ENCODE measurements at regions of chr16 and their contacts with region 1.

Region 1: GRCh38 chr16:67660564-67661028 is at the start of gene PARD6A:
- DNase-seq: peak; percentile 87 to 98
- ATAC-seq: peak; percentile 78 to 92 (median 85)
- H3K4me3 ChIP-seq: peak within 1 kb of the TSS; percentile 67
- H3K4me3 Mint-ChIP-seq: peak within 1 kb of the TSS; percentile 94
- H3K27ac ChIP-seq: peak within 1 kb of the TSS; percentile 91
- H3K27ac Mint-ChIP-seq: peak within 1 kb of the TSS; percentile 93 to 94
- H3K4me1 ChIP-seq: peaks cover 26% of the 10 kb centered on the region
- H3K4me1 Mint-ChIP-seq: peaks cover 0 to 33% of the 10 kb centered on the region in 2 donors
- H3K27me3 ChIP-seq: no peaks in the 10 kb centered on the region
- H3K27me3 Mint-ChIP-seq: no peaks in the 10 kb centered on the region
- CTCF ChIP-seq: no peak
- total RNA-seq, gene PARD6A: 3.1 to 4.4 (median 3.3) TPM

Region 2: GRCh38 chr16:67480833-67481560 is 179.6 kb before region 1 on chr16 and contains the start of gene ATP6V0D1:
- intact Hi-C with region 1: loop called (anchors 1 kb)
- DNase-seq: peak; percentile 100
- ATAC-seq: peak; percentile 81 to 97 (median 91)
- H3K4me3 ChIP-seq: peak within 1 kb of the TSS; percentile 87
- H3K4me3 Mint-ChIP-seq: peak within 1 kb of the TSS; percentile 100
- H3K27ac ChIP-seq: peak within 1 kb of the TSS; percentile 96
- H3K27ac Mint-ChIP-seq: peak within 1 kb of the TSS; percentile 100
- H3K4me1 ChIP-seq: peaks cover 42% of the 10 kb centered on the region
- H3K4me1 Mint-ChIP-seq: peaks cover 37 to 55% of the 10 kb centered on the region in 2 donors
- H3K27me3 ChIP-seq: no peaks in the 10 kb centered on the region
- H3K27me3 Mint-ChIP-seq: no peaks in the 10 kb centered on the region
- CTCF ChIP-seq: peak; percentile 80
- total RNA-seq, gene ATP6V0D1: 76.0 to 84.9 (median 83.3) TPM

Region 3: GRCh38 chr16:67703626-67704025 is 43.0 kb after region 1 on chr16:
- intact Hi-C with region 1: no loop called
- DNase-seq: peak in 1 of 2 donors; percentile 34
- ATAC-seq: peak; percentile 42 to 65 (median 53)
- H3K4me3 ChIP-seq: no peak overlapping the region
- H3K4me3 Mint-ChIP-seq: peak overlapping the region; percentile 45
- H3K27ac ChIP-seq: peak overlapping the region; percentile 7
- H3K27ac Mint-ChIP-seq: peak overlapping the region; percentile 67 to 86
- H3K4me1 ChIP-seq: peaks cover 11% of the 10 kb centered on the region
- H3K4me1 Mint-ChIP-seq: peaks cover 17 to 19% of the 10 kb centered on the region in 2 donors
- H3K27me3 ChIP-seq: no peaks in the 10 kb centered on the region
- H3K27me3 Mint-ChIP-seq: no peaks in the 10 kb centered on the region
- CTCF ChIP-seq: no peak

Measured in natural killer cell (primary cell).